IMR-90 (cell line): ENCODE measurements at regions of chr6 and their contacts with region 1.

Region 1: DNA sequence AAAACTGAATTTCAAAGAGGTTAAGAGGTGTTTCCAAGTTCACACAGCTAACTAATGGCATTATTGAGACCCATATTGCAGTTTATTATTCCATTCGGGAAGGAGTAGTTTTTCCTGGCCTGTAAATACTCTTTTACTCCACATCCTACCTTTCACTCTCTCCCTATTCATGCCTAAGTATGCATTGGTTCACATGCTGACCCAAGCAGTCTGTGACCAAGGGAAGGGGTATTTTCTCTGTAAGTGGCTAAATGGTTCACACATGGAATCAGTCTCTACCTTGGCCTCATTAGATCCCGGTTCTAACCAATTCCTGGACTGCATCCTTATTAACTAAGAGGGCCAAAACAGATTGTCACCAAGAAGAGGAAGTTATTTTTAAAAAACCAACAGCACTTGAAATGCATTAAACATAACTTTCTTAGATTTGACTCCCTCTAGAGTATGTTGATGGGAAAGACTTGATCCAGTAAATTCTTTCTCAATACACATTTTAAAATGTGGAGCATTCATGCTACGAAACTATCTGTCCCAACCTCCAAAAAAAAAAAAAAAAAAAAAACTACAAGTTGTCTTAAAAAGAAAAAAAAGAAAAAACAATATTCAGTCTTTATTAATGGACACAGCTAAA is 17.8 kb upstream of the RSPO3 start:
- DNase-seq: peak; percentile 41
- ATAC-seq: peak; percentile 56; the same call in 1 of the 2 replicates
- H3K4me3 ChIP-seq: no peak overlapping the region
- H3K27ac ChIP-seq: no peak overlapping the region
- H3K4me1 ChIP-seq: 0 out of 2 replicates have a peak, but pooled peaks cover 4% of the 10 kb centered on the region
- H3K27me3 ChIP-seq: peaks cover 15% of the 10 kb centered on the region
- CTCF ChIP-seq: peak; percentile 43
- POLR2A ChIP-seq: no peak
- RAD21 ChIP-seq: peak; percentile 35

Region 2: DNA sequence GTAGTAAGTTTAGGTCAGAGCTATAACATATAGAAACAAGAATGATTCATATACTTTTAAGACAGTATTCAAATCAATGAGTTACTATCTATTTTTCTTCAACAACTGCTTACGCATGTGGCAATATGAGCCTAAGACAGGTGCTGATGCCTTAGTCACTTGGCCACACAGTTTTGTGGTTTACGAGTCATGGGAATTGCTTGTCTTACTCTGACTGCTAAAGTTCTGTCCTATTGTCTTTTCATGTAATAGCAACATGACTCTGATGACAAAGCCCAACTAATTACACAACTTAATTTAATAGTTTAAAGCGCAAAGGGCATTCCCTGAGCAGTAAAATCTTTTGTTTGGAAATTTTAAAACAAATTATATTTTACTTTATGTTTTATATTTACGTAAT is 920.0 kb before region 1 on chr6:
- CTCF ChIA-PET with region 1: no interaction called
- POLR2A ChIA-PET with region 1: no interaction called
- dilution Hi-C with region 1: no loop called
- in situ Hi-C with region 1: no loop called
- intact Hi-C with region 1: loop called (anchors 10 kb)
- DNase-seq: peak; percentile 96
- ATAC-seq: 0 out of 2 replicates have a peak, but pooled peaks have one; percentile 42
- H3K4me3 ChIP-seq: no peak overlapping the region
- H3K27ac ChIP-seq: no peak overlapping the region
- H3K4me1 ChIP-seq: no peaks in the 10 kb centered on the region
- H3K27me3 ChIP-seq: peaks cover 4% of the 10 kb centered on the region; the same call in 1 of the 2 replicates
- CTCF ChIP-seq: no peak
- POLR2A ChIP-seq: no peak
- RAD21 ChIP-seq: no peak

Region 3: DNA sequence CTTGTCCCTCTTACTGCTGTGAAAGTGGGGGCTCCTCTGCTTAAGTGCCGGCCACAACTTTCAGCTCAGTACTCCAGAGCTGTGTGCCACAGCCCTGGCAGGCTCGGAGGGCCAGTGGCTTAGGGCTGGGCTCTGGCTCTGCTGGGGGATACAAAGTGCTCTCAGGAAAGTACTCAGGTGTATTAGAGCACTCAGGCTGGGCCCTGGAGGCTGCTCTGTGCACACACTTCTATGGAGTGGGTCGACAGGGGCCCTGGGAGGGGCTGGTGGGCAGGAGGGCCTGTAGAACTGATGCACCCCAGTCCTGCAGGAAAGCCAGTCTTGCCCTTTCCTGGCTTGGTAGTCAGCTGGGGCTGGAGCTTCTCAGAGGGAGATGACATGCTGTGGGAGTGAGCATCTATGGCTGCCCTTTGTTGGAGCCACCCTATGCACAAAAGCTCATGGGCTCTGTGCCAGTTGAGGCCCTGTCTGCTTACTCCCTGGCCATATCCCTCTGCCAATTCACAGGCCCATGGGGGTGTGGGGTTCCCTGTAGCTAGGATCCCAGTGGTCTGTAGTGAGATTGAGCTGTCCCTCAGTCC is 738.7 kb before region 1 on chr6:
- CTCF ChIA-PET with region 1: no interaction called
- POLR2A ChIA-PET with region 1: no interaction called
- dilution Hi-C with region 1: no loop called
- in situ Hi-C with region 1: no loop called
- intact Hi-C with region 1: loop called (anchors 5 kb)
- DNase-seq: no peak
- ATAC-seq: no peak
- H3K4me3 ChIP-seq: no peak overlapping the region
- H3K27ac ChIP-seq: no peak overlapping the region
- H3K4me1 ChIP-seq: no peaks in the 10 kb centered on the region
- H3K27me3 ChIP-seq: no peaks in the 10 kb centered on the region
- CTCF ChIP-seq: no peak
- POLR2A ChIP-seq: no peak
- RAD21 ChIP-seq: no peak

Region 4: GRCh38 chr6:127464881-127465459 is 364.3 kb after region 1 on chr6:
- CTCF ChIA-PET with region 1: no interaction called
- POLR2A ChIA-PET with region 1: no interaction called
- dilution Hi-C with region 1: no loop called
- in situ Hi-C with region 1: no loop called
- intact Hi-C with region 1: no loop called
- DNase-seq: peak; percentile 78
- ATAC-seq: peak; percentile 88
- H3K4me3 ChIP-seq: no peak overlapping the region
- H3K27ac ChIP-seq: no peak overlapping the region
- H3K4me1 ChIP-seq: peaks cover 4% of the 10 kb centered on the region; the same call in 1 of the 2 replicates
- H3K27me3 ChIP-seq: no peaks in the 10 kb centered on the region
- CTCF ChIP-seq: peak; percentile 88
- POLR2A ChIP-seq: no peak
- RAD21 ChIP-seq: peak; percentile 79

Region 5: DNA sequence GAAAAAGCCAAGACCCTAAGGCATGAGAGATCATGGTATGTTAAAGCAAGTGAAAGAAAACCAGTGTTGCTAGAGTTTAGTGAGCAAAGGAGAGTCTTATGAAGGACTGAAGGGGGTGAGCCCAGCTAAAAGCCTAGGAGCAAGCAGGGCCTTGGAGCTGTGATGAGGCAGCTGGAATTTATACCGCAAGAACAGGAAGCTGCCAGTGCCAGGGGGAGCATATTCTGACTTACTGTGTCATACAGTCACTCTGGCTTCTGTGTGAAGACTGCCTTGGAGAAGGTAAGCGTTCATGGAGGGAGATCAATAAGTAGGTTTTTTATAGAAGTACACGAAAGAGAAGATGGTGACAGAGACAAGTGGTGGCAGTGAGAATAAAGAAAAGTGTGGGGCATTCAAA is 1109.1 kb after region 1 on chr6:
- CTCF ChIA-PET with region 1: no interaction called
- POLR2A ChIA-PET with region 1: no interaction called
- dilution Hi-C with region 1: no loop called
- in situ Hi-C with region 1: no loop called
- intact Hi-C with region 1: no loop called
- DNase-seq: peak; percentile 79
- ATAC-seq: peak; percentile 73
- H3K4me3 ChIP-seq: no peak overlapping the region
- H3K27ac ChIP-seq: no peak overlapping the region
- H3K4me1 ChIP-seq: peaks cover 5% of the 10 kb centered on the region
- H3K27me3 ChIP-seq: no peaks in the 10 kb centered on the region
- CTCF ChIP-seq: no peak
- POLR2A ChIP-seq: no peak
- RAD21 ChIP-seq: no peak